CD8-positive, alpha-beta T cell (primary cell): ENCODE measurements at regions of chr1 and their contacts with region 1.

Region 1: DNA sequence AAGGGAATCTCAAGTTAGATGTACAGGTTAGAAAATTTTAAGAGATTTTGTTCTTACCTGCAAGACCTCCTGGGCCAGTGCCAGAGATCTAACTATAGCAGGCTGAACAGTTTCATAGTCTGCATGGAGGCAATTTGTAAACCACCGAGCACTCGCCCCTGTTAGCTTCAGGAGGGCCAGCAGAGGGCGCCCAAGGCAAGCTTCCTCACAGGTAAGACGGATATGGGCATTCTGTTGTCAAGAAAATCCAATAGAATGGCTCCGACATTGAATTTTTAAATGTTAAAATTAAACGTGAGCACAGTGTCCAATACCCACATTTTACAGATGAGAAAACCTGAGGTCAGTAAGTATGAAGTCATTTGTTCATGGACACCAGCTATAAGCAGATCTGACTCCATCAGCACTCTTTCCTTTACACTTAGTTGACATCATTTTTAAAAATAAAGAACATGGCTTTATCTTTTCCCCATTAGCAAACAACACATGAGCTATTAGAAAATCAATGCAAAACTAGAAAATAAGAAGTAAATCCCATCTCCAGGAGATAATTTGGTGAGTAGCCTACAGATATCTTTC is 2.2 kb downstream of the REG4 start:
- DNase-seq: peak; percentile 22 to 80 (median 69)
- ATAC-seq: peak; percentile 88
- H3K4me3 ChIP-seq: no peak overlapping the region
- H3K4me3 Mint-ChIP-seq: no peak overlapping the region
- H3K27ac ChIP-seq: no peak overlapping the region
- H3K27ac Mint-ChIP-seq: no peak overlapping the region
- H3K4me1 ChIP-seq: no peaks in the 10 kb centered on the region
- H3K4me1 Mint-ChIP-seq: peaks cover 3% of the 10 kb centered on the region
- H3K27me3 ChIP-seq: no peaks in the 10 kb centered on the region
- H3K27me3 Mint-ChIP-seq: peaks cover 10% of the 10 kb centered on the region
- CTCF ChIP-seq: peak; percentile 96

Region 2: GRCh38 chr1:119795261-119796200 is 13.5 kb before region 1 on chr1:
- CTCF ChIA-PET with region 1: interaction called, 13 read pairs
- POLR2A ChIA-PET with region 1: interaction called, 6 read pairs
- intact Hi-C with region 1: loop called in 1 of 2 experiments (anchors 1 kb)
- DNase-seq: no peak
- ATAC-seq: no peak
- H3K4me3 ChIP-seq: no peak overlapping the region
- H3K4me3 Mint-ChIP-seq: no peak overlapping the region
- H3K27ac ChIP-seq: no peak overlapping the region
- H3K27ac Mint-ChIP-seq: no peak overlapping the region
- H3K4me1 ChIP-seq: peaks cover 20% of the 10 kb centered on the region
- H3K4me1 Mint-ChIP-seq: peaks cover 26% of the 10 kb centered on the region
- H3K27me3 ChIP-seq: no peaks in the 10 kb centered on the region
- H3K27me3 Mint-ChIP-seq: no peaks in the 10 kb centered on the region
- CTCF ChIP-seq: no peak

Region 3: DNA sequence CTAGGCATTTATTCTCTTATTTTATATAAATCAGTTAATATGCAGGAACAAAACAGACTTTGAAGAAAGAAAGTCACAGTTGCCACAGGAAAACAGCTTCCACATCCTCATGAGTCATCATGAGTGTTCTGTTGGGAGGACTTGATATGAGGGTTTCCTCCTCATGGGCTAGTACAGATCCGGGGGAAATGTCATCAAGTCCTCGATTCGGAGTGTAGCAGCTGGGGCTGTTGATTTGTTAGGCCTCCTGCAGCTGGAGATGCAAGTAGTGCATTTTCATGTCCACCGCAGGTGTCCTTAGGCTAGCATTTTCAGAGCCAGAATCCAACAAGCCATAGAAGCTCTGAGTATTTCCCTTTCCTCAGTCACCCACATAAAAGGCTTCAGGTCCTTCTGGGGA is 50.6 kb after region 1 on chr1:
- CTCF ChIA-PET with region 1: no interaction called
- POLR2A ChIA-PET with region 1: no interaction called
- intact Hi-C with region 1: no loop called
- DNase-seq: peak in 1 of 9 experiments; percentile 5
- ATAC-seq: no peak
- H3K4me3 ChIP-seq: no peak overlapping the region
- H3K4me3 Mint-ChIP-seq: no peak overlapping the region
- H3K27ac ChIP-seq: no peak overlapping the region
- H3K27ac Mint-ChIP-seq: no peak overlapping the region
- H3K4me1 ChIP-seq: no peaks in the 10 kb centered on the region
- H3K4me1 Mint-ChIP-seq: peaks cover 6% of the 10 kb centered on the region
- H3K27me3 ChIP-seq: no peaks in the 10 kb centered on the region
- H3K27me3 Mint-ChIP-seq: peaks cover 2% of the 10 kb centered on the region
- CTCF ChIP-seq: no peak